ENCODE measurements at regions of chr4 and their contacts with region 1.

Region 1: GRCh38 chr4:183175631-183176232 is 76.7 kb downstream of the WWC2 start:
- DNase-seq: no peak
- H3K4me3 ChIP-seq: no peak overlapping the region
- H3K27ac ChIP-seq: no peak overlapping the region
- H3K4me1 ChIP-seq: no peaks in the 10 kb centered on the region
- H3K27me3 ChIP-seq: no peaks in the 10 kb centered on the region
- CTCF ChIP-seq: no peak
- POLR2A ChIP-seq: no peak

Region 2: GRCh38 chr4:183129675-183130074 is 46.1 kb before region 1 on chr4:
- intact Hi-C with region 1: loop called (anchors 10 kb)
- DNase-seq: no peak
- H3K4me3 ChIP-seq: no peak overlapping the region
- H3K27ac ChIP-seq: no peak overlapping the region
- H3K4me1 ChIP-seq: no peaks in the 10 kb centered on the region
- H3K27me3 ChIP-seq: no peaks in the 10 kb centered on the region
- CTCF ChIP-seq: no peak
- POLR2A ChIP-seq: no peak